ENCODE measurements at regions of chr11 and their contacts with region 1.

Region 1: GRCh38 chr11:8566613-8567210 is 27.3 kb downstream of the STK33 start:
- DNase-seq: peak; percentile 26
- CTCF ChIP-seq: peak; percentile 49

Region 2: DNA sequence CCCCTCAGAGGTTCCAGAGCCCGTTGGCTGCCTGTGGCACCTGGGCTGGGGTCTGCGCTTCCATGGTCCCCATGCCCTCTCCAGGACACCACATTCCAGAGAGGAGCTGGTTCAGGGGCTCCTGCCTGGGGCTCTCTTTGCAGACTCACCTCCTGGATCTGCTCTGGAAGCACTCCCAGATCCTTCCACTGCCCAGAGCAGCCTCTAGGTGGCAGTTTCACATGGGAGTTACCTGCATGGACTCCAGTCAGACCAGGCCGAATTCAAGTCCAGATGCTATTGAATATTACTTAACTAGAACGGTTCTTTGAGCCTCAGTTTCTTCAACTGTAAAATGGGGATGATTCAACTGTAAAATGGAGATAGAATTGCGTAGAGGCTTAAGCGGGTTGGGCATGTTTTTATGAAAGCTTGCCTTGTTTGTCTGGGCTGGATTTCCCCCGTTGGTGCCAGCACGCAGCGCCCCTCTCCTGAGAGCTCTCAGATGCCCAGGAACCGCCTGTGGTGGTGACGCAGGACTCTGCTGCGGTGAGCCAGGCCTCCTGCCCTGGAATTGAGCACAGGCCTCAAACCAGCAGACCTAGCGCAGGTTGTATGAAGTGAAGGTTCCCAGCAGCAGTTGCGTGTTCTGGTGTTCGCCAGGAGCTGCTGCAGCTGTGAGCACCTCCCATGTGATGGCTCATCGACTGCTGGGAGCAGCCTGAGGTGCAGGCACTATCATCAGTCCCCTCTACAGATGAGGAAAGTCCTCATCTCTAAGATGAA is 347.3 kb before region 1 on chr11:
- CTCF ChIA-PET with region 1: interaction called, 69 read pairs
- POLR2A ChIA-PET with region 1: no interaction called
- DNase-seq: peak; percentile 62
- CTCF ChIP-seq: peak; percentile 70

Region 3: GRCh38 chr11:8231979-8232378 is 334.7 kb before region 1 on chr11:
- CTCF ChIA-PET with region 1: interaction called, 38 read pairs
- POLR2A ChIA-PET with region 1: no interaction called
- DNase-seq: no peak
- CTCF ChIP-seq: no peak

Region 4: GRCh38 chr11:8328848-8329330 is 237.8 kb before region 1 on chr11:
- CTCF ChIA-PET with region 1: interaction called, 18 read pairs
- POLR2A ChIA-PET with region 1: no interaction called
- DNase-seq: peak; percentile 87
- CTCF ChIP-seq: peak; percentile 85